Astrocyte of the cerebellum (primary cell): ENCODE measurements at regions of chr6 and their contacts with region 1.

Region 1: GRCh38 chr6:26553635-26554446 is 15.7 kb downstream of the HMGN4 start:
- DNase-seq: peak; percentile 90
- H3K4me3 ChIP-seq: peak overlapping the region; percentile 59
- CTCF ChIP-seq: no peak

Region 2: GRCh38 chr6:25889877-25890853 is 663.7 kb before region 1 on chr6:
- in situ Hi-C with region 1: no loop called
- DNase-seq: no peak
- H3K4me3 ChIP-seq: no peak overlapping the region
- CTCF ChIP-seq: peak; percentile 47

Region 3: DNA sequence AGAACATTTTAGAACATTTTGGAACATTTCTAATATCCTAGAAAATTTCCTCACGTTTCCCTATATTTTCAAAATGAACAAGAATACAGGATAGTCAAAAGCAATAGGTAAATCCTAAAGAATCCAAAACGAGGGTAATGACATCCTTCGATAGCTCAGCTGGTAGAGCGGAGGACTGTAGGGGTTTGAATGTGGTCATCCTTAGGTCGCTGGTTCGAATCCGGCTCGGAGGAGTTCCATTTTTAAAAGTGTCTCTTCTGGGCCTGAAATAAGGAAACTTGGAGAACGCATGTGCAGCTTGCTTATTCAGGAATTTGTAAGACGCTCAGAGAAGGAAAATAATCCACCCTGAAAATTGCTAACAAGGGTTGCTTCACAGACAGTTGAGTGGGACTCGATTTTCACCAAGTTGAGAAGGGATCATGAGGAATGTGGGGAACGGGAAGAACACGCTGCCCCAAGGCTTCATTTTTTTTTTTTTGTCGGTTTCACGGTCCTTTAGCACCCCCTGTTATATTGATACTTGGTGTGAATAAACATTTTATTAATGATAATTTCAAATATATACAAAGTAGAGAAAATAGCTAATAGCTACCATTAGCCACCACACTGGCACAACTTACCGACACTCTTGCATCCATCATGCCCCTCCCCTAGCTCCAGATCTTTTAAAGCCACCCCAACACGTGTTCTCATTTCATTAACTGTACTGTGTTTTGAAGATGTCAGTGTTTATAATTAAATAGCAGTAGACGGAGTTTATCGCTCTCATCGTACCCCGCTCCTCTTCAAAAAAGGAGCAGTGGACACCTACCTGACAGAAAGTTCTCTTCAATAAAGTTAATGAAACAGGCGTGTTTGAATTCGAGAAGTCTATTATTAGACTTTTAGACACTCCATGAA is 41.1 kb after region 1 on chr6:
- in situ Hi-C with region 1: loop called (anchors 5 kb)
- DNase-seq: no peak
- H3K4me3 ChIP-seq: peak overlapping the region; percentile 94
- CTCF ChIP-seq: no peak

Region 4: GRCh38 chr6:26613689-26614683 is 60.1 kb after region 1 on chr6:
- in situ Hi-C with region 1: no loop called
- DNase-seq: no peak
- H3K4me3 ChIP-seq: peak overlapping the region; percentile 34
- CTCF ChIP-seq: no peak